ENCODE measurements at regions of chr2 and their contacts with region 1.

Region 1: DNA sequence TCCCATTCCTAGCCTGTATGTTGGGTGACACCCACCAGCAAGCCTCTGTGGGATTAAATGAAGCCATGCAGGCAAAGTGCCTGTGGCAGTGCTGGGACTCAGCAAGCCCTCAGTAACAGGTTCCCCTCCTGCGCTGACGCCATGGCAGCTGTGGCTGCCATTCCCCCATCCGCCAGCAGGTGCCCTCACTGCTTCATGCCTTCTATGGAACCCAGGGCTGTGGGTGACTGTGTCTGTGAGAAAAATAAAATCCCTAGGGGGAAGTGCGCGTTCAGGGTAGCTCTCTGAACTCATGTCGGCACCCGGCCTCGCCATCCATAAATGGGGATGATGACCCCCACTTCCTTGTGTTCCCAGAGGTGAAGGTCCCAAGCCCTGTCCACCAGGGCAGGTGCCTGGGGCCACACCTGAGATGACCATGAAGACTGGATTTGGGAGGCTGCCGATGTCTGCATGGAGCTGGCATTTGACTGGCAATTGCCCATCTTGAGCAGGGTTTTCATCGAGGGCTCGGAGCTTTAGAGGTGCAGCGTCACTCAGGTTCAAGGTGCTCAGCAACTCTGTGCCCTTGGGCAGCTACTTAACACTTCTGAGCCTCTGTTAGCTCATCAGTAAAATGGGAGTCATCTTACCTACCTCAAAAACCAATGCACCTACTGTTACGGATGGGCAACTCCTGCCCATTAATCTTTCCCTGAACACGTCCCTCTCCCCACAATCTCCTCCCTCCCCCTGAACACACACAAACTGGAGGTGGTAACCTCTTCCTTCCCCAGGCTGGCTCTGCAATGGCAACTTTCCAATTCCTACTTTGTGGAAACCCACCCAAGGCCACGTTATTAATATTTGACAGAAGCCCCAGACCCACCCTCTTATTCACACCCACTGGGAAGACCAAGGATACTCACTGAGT is 2.9 kb upstream of the MAL start:
- DNase-seq: peak; percentile 93
- H3K4me3 Mint-ChIP-seq: no peak overlapping the region
- H3K27ac Mint-ChIP-seq: peak overlapping the region; percentile 3
- H3K4me1 Mint-ChIP-seq: peaks cover 41% of the 10 kb centered on the region
- H3K27me3 Mint-ChIP-seq: no peaks in the 10 kb centered on the region

Region 2: GRCh38 chr2:95043300-95044093 is 20.9 kb after region 1 on chr2:
- CTCF ChIA-PET with region 1: interaction called, 39 read pairs
- intact Hi-C with region 1: loop called (anchors 1 kb)
- DNase-seq: peak; percentile 83
- H3K4me3 Mint-ChIP-seq: no peak overlapping the region
- H3K27ac Mint-ChIP-seq: no peak overlapping the region
- H3K4me1 Mint-ChIP-seq: peaks cover 80% of the 10 kb centered on the region
- H3K27me3 Mint-ChIP-seq: no peaks in the 10 kb centered on the region

Region 3: GRCh38 chr2:95062242-95063085 is 39.9 kb after region 1 on chr2:
- CTCF ChIA-PET with region 1: interaction called, 137 read pairs
- intact Hi-C with region 1: no loop called
- DNase-seq: no peak
- H3K4me3 Mint-ChIP-seq: peak overlapping the region; percentile 22
- H3K27ac Mint-ChIP-seq: peak overlapping the region; percentile 75
- H3K4me1 Mint-ChIP-seq: peaks cover 35% of the 10 kb centered on the region
- H3K27me3 Mint-ChIP-seq: no peaks in the 10 kb centered on the region

Region 4: GRCh38 chr2:95106081-95106480 is 83.5 kb after region 1 on chr2:
- CTCF ChIA-PET with region 1: interaction called, 12 read pairs
- intact Hi-C with region 1: no loop called
- DNase-seq: no peak
- H3K4me3 Mint-ChIP-seq: no peak overlapping the region
- H3K27ac Mint-ChIP-seq: no peak overlapping the region
- H3K4me1 Mint-ChIP-seq: no peaks in the 10 kb centered on the region
- H3K27me3 Mint-ChIP-seq: no peaks in the 10 kb centered on the region

Region 5: DNA sequence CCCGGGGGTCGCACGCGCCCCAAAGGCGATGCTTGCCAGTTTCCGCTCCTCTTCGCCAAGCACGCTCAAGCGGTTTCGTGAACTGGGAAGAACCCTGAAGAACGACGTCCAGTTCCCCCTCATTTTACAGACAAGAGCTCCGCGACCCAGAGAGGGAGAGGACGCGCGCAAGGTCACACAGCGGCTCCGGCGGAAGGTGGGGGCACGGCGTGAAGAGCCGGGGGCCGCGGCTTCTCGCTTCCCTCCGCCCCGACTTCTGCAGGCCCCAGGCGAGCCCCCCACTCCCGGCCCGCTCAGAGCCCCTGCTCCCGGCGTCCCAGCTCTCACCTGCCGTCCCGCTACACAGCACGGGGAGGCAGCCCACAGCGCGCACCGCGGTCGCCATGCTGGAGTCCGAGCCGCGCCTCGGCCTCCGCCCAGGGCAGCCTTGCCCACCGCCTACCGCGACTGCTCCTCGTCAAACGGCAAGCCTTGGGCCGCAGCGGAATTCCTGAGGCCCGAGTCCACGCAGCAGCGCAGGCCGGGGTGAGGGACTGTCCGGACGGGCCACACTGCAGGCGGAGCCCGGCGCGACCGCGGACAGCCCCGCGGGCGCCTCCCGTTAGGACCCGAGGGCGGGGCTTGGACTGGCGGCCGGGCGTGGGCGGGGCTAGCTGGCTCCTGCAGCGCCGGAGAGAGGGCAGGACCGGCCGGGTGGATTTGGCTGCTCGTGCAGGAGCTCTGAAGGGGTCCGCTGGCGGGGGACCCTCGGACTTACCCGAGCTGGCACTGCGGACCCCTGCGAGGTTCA is 99.0 kb after region 1 on chr2 and contains the start of gene MRPS5:
- CTCF ChIA-PET with region 1: interaction called, 133 read pairs
- intact Hi-C with region 1: no loop called
- DNase-seq: peak; percentile 90
- H3K4me3 Mint-ChIP-seq: peak within 1 kb of the TSS; percentile 93
- H3K27ac Mint-ChIP-seq: peak within 1 kb of the TSS; percentile 90
- H3K4me1 Mint-ChIP-seq: peaks cover 40% of the 10 kb centered on the region
- H3K27me3 Mint-ChIP-seq: no peaks in the 10 kb centered on the region
- total RNA-seq, gene MRPS5: 90.4 to 96.0 TPM

Region 6: DNA sequence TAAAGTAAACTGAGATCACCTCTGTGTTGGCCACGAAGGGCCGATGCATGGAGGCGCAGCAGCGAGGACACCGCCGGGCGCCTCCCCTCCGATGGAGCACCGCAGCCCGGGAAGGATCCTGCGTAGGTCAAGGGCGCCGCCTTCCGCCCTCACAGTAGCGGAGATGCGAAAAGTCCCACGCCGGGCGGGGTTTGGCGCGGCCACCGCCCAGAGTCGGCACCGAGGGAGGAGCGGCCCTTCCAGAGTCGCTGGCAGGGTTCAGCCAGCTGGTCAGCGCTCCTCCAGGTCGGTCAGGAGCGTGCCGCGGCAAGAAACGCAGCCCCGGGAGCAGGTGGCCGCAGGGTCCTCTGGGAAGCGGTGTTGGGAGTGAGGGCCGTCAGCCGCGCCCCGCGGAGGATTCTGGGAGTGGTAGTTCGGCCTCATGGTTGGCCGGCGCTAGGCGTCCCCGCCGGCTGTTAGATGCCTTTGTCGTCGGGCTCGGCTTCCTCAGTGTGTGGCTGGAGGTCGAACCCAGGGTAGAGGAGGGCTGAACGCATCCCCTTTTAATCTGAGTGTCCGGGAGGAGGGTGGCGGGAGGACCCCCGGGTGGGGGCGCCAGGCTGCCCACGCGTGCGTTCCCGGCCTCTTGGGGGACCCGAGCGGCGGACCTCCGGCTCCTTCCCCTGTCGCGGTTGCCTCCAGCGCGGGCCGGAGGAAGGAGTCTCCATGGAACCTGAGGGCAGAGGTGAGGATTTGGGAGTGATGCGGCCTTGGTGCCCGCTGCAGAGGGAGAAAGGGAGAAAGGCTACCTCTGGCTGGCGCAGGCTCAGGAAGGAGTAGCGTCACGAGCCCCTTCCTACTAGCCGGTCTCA is 184.8 kb after region 1 on chr2 and contains the start of gene ZNF892:
- CTCF ChIA-PET with region 1: interaction called, 3 read pairs
- intact Hi-C with region 1: loop called (anchors 1 kb)
- DNase-seq: peak; percentile 86
- H3K4me3 Mint-ChIP-seq: peak within 1 kb of the TSS; percentile 88
- H3K27ac Mint-ChIP-seq: peak within 1 kb of the TSS; percentile 57
- H3K4me1 Mint-ChIP-seq: peaks cover 12% of the 10 kb centered on the region
- H3K27me3 Mint-ChIP-seq: no peaks in the 10 kb centered on the region
- total RNA-seq, gene ZNF892: 2.7 to 3.1 TPM